ENCODE measurements at regions of chr14 and their contacts with region 1.

Region 1: DNA sequence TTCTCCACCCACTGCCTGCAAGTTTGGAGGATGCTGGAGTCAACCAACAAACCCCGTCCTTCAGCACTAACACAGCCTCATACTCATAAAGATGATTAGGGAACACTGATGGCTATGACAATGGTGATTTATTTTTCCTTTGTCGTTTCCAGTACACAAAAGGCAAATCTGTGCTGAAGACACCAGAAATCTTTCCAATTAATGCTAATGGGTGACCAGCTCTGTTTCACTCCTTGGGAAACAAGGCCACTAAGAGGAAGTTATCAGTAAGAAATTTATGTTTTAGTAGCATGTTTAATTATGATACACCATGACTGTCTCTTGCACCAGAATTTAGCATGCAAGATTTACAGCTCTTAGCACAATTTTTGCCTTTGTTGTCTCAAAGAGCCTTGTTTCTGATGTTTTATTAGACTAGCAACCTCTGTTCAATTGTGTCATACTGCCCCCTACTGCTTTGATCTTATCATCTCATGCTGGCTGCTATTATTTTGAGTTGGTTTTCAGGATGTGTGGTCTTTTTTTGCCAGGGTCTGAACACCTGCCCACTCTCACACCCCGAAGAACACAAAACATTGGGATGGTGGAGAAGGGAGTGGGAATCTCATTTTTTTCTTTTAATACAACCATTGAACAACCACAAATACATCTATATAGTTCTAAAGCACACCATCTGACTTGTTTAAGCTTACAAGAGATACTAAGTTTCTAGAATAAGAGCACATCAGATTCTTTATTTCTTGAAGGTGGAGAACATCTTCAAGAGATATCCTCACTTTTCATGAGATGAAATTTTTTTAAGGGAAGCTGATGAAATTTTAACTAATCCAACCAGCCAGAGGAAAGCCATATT is 160.9 kb downstream of the SPTSSA start:
- DNase-seq: peak in 1 of 2 experiments; percentile 64
- H3K4me3 ChIP-seq: no peak overlapping the region
- H3K4me3 Mint-ChIP-seq: no peak overlapping the region
- H3K27ac Mint-ChIP-seq: no peak overlapping the region
- H3K4me1 ChIP-seq: peaks cover 13% of the 10 kb centered on the region
- H3K4me1 Mint-ChIP-seq: peaks cover 18% of the 10 kb centered on the region
- H3K27me3 ChIP-seq: no peaks in the 10 kb centered on the region
- H3K27me3 Mint-ChIP-seq: no peaks in the 10 kb centered on the region
- CTCF ChIP-seq: peak; percentile 35 to 56

Region 2: DNA sequence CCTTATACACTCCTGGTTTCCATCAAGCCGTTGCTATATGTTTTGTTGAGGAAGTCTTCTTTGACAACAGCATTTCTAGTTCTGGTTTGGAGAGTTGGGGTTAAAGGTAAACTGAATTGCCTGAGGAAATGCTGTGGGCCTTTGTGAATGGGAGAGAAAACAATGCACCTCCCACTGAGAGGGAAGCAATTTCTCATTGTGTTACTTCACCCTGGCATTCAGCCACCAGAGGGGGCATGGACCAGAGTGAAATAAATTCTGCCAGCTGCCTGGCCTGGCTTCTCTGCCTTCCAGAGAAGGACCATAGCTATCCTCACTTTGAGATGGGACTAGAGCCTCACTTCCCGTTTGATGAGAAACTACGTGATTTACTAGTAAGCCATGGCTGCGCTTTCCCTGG is 825.5 kb before region 1 on chr14:
- CTCF ChIA-PET with region 1: no interaction called
- POLR2A ChIA-PET with region 1: no interaction called
- intact Hi-C with region 1: loop called (anchors 5 kb)
- DNase-seq: peak; percentile 44 to 48
- H3K4me3 ChIP-seq: no peak overlapping the region
- H3K4me3 Mint-ChIP-seq: no peak overlapping the region
- H3K27ac Mint-ChIP-seq: no peak overlapping the region
- H3K4me1 ChIP-seq: no peaks in the 10 kb centered on the region
- H3K4me1 Mint-ChIP-seq: no peaks in the 10 kb centered on the region
- H3K27me3 ChIP-seq: no peaks in the 10 kb centered on the region; the same call in 1 of the 2 replicates
- H3K27me3 Mint-ChIP-seq: peaks cover 20% of the 10 kb centered on the region
- CTCF ChIP-seq: peak; percentile 30 to 44

Region 3: DNA sequence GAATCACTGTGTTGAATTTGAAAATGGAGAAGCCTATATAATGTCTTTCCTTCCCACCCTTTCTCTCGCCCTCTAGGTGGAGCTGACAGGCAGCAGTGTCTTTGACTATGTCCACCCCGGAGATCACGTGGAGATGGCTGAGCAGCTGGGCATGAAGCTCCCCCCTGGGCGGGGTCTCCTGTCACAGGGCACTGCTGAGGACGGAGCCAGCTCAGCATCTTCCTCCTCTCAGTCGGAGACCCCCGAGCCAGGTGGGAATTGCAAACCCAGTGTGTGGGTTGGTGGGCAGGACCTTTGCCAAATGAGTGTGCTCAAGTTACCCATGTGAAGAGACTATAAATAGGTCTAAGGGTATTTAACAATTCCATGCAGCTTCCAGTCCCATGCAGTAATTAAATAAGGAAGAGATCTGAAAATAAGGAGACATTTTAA is 625.0 kb before region 1 on chr14:
- CTCF ChIA-PET with region 1: no interaction called
- POLR2A ChIA-PET with region 1: no interaction called
- intact Hi-C with region 1: loop called (anchors 5 kb)
- DNase-seq: peak; percentile 62 to 67
- H3K4me3 ChIP-seq: no peak overlapping the region
- H3K4me3 Mint-ChIP-seq: no peak overlapping the region
- H3K27ac Mint-ChIP-seq: no peak overlapping the region
- H3K4me1 ChIP-seq: no peaks in the 10 kb centered on the region
- H3K4me1 Mint-ChIP-seq: peaks cover 6% of the 10 kb centered on the region
- H3K27me3 ChIP-seq: no peaks in the 10 kb centered on the region
- H3K27me3 Mint-ChIP-seq: peaks cover 10% of the 10 kb centered on the region
- CTCF ChIP-seq: peak; percentile 59 to 68

Region 4: DNA sequence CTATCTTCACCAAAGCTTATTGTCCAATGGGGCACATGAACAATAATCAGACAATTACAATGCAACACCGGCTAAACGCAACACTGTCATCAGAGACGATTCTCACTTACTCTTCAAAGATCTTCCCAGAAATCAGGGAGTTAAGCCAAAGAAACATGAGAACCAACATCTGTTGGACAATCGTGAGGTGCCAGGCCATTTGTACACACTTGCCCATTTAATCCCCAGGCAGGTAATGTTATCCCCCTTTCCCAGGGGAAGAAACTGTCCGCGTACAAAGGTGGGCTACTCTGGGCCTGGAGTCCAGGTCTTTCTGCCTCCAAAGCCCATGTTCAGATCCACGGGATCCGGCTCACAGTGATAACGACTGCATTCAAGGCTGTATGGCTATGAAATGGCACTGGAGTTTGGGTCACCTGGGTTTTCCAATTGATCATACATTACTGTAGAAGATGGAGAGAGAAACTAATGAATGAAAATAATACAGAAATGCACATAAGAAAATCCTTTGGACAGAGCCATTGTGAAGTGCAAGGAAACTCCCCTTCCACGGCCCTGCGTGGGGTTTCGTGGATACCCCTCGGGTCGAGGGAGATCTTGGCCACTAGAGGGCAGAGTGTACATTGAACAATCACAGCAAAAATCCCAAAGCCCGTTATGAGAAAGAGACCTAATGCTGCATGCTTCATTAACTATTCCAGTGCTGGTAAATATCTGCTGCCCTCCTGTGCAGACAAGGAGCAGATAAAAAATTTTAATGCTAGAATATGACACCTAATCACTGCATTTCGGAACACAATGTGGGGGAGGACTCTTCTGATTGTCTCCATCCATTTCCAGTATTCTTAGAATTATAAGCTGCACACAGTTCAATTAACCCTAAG is 461.7 kb before region 1 on chr14:
- CTCF ChIA-PET with region 1: no interaction called
- POLR2A ChIA-PET with region 1: no interaction called
- intact Hi-C with region 1: loop called (anchors 1 kb)
- DNase-seq: peak; percentile 54 to 73
- H3K4me3 ChIP-seq: no peak overlapping the region
- H3K4me3 Mint-ChIP-seq: no peak overlapping the region
- H3K27ac Mint-ChIP-seq: no peak overlapping the region
- H3K4me1 ChIP-seq: peaks cover 10% of the 10 kb centered on the region
- H3K4me1 Mint-ChIP-seq: no peaks in the 10 kb centered on the region
- H3K27me3 ChIP-seq: no peaks in the 10 kb centered on the region
- H3K27me3 Mint-ChIP-seq: no peaks in the 10 kb centered on the region
- CTCF ChIP-seq: peak; percentile 74 to 78

Region 5: GRCh38 chr14:33848706-33849454 is 452.2 kb before region 1 on chr14:
- CTCF ChIA-PET with region 1: interaction called, 11 read pairs
- POLR2A ChIA-PET with region 1: no interaction called
- intact Hi-C with region 1: loop called (anchors 1 kb)
- DNase-seq: peak; percentile 83 to 84
- H3K4me3 ChIP-seq: no peak overlapping the region
- H3K4me3 Mint-ChIP-seq: no peak overlapping the region
- H3K27ac Mint-ChIP-seq: no peak overlapping the region
- H3K4me1 ChIP-seq: no peaks in the 10 kb centered on the region
- H3K4me1 Mint-ChIP-seq: peaks cover 8% of the 10 kb centered on the region
- H3K27me3 ChIP-seq: no peaks in the 10 kb centered on the region
- H3K27me3 Mint-ChIP-seq: no peaks in the 10 kb centered on the region
- CTCF ChIP-seq: peak; percentile 65 to 84

Region 6: DNA sequence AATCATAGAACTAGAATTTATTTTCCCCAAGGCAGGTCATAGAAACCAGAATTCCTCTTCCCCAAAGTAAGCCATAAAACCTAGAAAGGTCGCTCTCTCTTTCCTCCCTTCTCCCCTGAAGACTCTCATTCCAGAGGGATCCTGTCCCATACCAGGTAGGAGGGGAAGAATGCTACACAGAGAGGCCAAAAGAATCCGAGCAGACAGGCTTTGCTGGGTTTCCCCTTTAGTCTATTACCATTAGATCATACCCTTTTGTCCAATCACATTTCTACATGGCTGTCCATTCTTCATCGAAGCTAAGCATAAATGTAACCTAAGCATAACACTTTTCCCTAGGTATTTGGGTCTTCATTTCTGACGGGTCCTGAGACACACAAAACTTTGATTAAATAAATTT is 43.6 kb before region 1 on chr14:
- CTCF ChIA-PET with region 1: no interaction called
- POLR2A ChIA-PET with region 1: no interaction called
- intact Hi-C with region 1: loop called (anchors 2 kb)
- DNase-seq: peak; percentile 39 to 45
- H3K4me3 ChIP-seq: no peak overlapping the region
- H3K4me3 Mint-ChIP-seq: peak overlapping the region; percentile 44
- H3K27ac Mint-ChIP-seq: peak overlapping the region; percentile 90
- H3K4me1 ChIP-seq: peaks cover 22% of the 10 kb centered on the region; the same call in 1 of the 2 replicates
- H3K4me1 Mint-ChIP-seq: peaks cover 27% of the 10 kb centered on the region
- H3K27me3 ChIP-seq: no peaks in the 10 kb centered on the region
- H3K27me3 Mint-ChIP-seq: no peaks in the 10 kb centered on the region
- CTCF ChIP-seq: no peak